ENCODE measurements at regions of chr20 and their contacts with region 1.

Region 1: DNA sequence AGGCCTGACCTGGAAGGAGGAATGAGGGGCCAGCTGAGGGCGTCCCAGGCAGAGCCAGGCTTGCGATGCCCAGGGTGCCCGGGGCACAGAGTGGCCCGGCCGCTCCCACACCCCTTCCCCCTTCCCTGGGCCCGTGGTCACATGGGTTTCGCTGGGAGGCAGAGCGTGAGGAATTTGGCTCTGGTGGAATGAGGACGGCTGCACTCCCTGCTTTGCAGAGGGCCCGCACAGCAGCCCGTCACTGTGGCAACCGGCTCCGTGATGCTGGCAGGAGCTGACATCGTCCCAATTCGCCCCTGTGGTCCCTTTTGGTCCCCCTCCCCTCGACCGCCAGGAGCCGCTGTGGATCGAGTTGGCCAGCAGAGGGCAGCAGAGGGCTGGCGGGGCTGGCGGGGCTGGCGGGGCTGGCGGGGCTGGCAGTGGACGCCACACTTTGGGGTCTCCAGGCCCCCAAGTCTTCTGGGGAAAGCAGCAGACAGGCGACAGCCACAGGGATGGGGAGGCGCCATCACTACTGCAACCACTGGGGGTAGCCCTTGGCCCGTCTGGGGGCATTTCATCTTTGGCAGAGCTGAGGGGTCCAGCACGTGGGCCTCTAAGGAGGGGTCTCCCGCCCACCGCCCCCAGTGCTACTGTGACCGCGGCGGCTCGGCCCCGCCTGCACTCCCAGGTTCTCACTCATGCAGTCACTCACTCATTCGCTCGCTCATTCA is 49.6 kb upstream of the BHLHE23 start:
- DNase-seq: no peak
- H3K4me3 ChIP-seq: no peak overlapping the region
- H3K27ac ChIP-seq: no peak overlapping the region
- H3K4me1 ChIP-seq: no peaks in the 10 kb centered on the region
- H3K27me3 ChIP-seq: peaks cover 4% of the 10 kb centered on the region
- CTCF ChIP-seq: peak; percentile 36 to 68

Region 2: GRCh38 chr20:62972270-62973032 is 83.9 kb before region 1 on chr20:
- CTCF ChIA-PET with region 1: no interaction called
- dilution Hi-C with region 1: loop called (anchors 5 kb)
- in situ Hi-C with region 1: no loop called
- intact Hi-C with region 1: loop called (anchors 1 kb)
- DNase-seq: peak; percentile 64
- H3K4me3 ChIP-seq: peak overlapping the region in 2 of 3 experiments; percentile 10 to 13
- H3K27ac ChIP-seq: no peak overlapping the region
- H3K4me1 ChIP-seq: peaks cover 12% of the 10 kb centered on the region
- H3K27me3 ChIP-seq: peaks cover 3% of the 10 kb centered on the region
- CTCF ChIP-seq: peak; percentile 87 to 94

Region 3: GRCh38 chr20:63140514-63141433 is 84.4 kb after region 1 on chr20:
- CTCF ChIA-PET with region 1: no interaction called
- dilution Hi-C with region 1: loop called (anchors 5 kb)
- in situ Hi-C with region 1: no loop called
- intact Hi-C with region 1: no loop called
- DNase-seq: no peak
- H3K4me3 ChIP-seq: no peak overlapping the region
- H3K27ac ChIP-seq: no peak overlapping the region
- H3K4me1 ChIP-seq: no peaks in the 10 kb centered on the region
- H3K27me3 ChIP-seq: no peaks in the 10 kb centered on the region
- CTCF ChIP-seq: no peak

Region 4: DNA sequence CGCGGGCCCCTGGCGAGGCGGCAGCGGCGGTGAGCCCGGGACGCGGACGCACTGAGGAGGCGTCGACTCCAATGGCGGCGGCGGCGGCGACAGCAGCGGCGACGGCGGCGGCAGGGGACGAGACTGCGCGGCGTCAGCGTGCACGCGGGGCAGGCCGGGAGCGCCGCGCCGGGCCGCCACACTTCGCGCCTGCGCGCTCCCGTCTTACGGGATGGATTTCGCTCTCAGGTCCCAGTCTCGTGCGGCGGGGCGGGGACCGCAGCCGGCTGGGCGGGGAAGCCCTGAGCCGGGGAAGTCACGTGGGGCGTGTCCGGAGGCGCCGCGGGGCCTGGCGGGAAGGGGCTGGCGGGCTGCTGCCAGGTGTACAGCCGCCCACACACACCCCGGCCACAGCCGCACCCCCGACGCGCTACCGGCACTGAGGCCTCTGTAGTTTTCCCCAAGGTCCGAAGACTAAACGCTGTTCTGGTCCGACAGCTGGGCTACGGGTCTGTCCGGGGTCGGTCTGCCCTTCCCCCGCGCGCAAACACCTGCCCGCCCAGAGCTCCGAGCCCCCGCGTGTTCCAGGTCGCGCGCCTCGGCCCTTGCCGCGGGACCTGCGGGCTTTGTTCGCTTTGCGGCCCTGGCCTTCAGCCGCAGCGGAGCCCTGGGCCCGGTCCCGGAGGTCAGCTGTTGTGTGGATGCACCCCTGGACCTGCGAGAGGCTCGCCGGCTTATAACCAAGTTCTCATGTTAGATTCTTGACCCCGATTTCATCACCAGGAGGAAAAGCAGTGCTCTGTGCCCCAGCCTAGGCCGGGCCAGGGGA is 159.9 kb after region 1 on chr20 and contains the start of gene YTHDF1:
- CTCF ChIA-PET with region 1: no interaction called
- dilution Hi-C with region 1: loop called (anchors 5 kb)
- in situ Hi-C with region 1: no loop called
- intact Hi-C with region 1: loop called (anchors 1 kb)
- DNase-seq: peak; percentile 94
- H3K4me3 ChIP-seq: peak within 1 kb of the TSS; percentile 72 to 91 (median 81)
- H3K27ac ChIP-seq: peak within 1 kb of the TSS; percentile 68
- H3K4me1 ChIP-seq: peaks cover 32% of the 10 kb centered on the region
- H3K27me3 ChIP-seq: peaks cover 2% of the 10 kb centered on the region
- CTCF ChIP-seq: no peak
- total RNA-seq, gene YTHDF1: 30.3 to 40.4 TPM

Region 5: GRCh38 chr20:63230800-63231268 is 174.4 kb after region 1 on chr20:
- CTCF ChIA-PET with region 1: no interaction called
- dilution Hi-C with region 1: no loop called
- in situ Hi-C with region 1: no loop called
- intact Hi-C with region 1: loop called (anchors 5 kb)
- DNase-seq: peak; percentile 42
- H3K4me3 ChIP-seq: no peak overlapping the region
- H3K27ac ChIP-seq: no peak overlapping the region
- H3K4me1 ChIP-seq: no peaks in the 10 kb centered on the region
- H3K27me3 ChIP-seq: peaks cover 7% of the 10 kb centered on the region
- CTCF ChIP-seq: peak in 1 of 2 donors; percentile 54

Region 6: GRCh38 chr20:63394069-63394919 is 337.9 kb after region 1 on chr20:
- CTCF ChIA-PET with region 1: no interaction called
- dilution Hi-C with region 1: loop called (anchors 5 kb)
- in situ Hi-C with region 1: no loop called
- intact Hi-C with region 1: no loop called
- DNase-seq: no peak
- H3K4me3 ChIP-seq: no peak overlapping the region
- H3K27ac ChIP-seq: no peak overlapping the region
- H3K4me1 ChIP-seq: no peaks in the 10 kb centered on the region
- H3K27me3 ChIP-seq: peaks cover 4% of the 10 kb centered on the region
- CTCF ChIP-seq: no peak

Measured in mammary epithelial cell (primary cell).